IMR-90 (cell line): ENCODE measurements at regions of chr22 and their contacts with region 1.

Region 1: DNA sequence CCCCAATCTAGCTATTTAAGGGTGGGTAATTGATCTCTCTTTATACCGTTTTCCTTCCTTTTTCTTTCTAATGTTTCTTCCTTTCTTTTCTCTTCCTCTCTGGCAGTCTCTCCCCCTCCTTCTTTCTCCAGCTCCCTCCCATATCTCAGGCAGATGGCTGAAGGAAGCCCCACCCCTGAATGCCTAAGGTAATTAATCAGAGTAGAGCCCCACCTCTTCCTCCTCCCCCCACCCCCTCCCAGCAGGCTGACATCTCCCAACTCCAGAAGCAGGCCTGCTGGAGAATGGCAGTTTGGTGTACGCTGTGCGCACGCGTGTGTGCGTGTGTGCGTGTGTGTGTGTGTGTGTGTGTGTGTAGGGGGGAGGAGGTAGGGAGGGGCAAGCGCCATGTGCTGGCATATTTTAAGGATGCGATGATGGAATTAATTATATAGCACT is 122.6 kb downstream of the APOL5 start:
- DNase-seq: peak; percentile 98
- ATAC-seq: peak; percentile 87
- H3K4me3 ChIP-seq: peak overlapping the region; percentile 77
- H3K27ac ChIP-seq: peak overlapping the region; percentile 86
- H3K4me1 ChIP-seq: peaks cover 6% of the 10 kb centered on the region
- H3K27me3 ChIP-seq: no peaks in the 10 kb centered on the region
- CTCF ChIP-seq: no peak
- POLR2A ChIP-seq: peak; percentile 48; the same call in 1 of the 2 replicates
- RAD21 ChIP-seq: no peak

Region 2: GRCh38 chr22:35648066-35649025 is 192.0 kb before region 1 on chr22 and contains the start of gene APOL6:
- CTCF ChIA-PET with region 1: no interaction called
- POLR2A ChIA-PET with region 1: interaction called, 3 read pairs
- dilution Hi-C with region 1: no loop called
- in situ Hi-C with region 1: no loop called
- intact Hi-C with region 1: loop called (anchors 5 kb)
- DNase-seq: peak; percentile 76
- ATAC-seq: peak; percentile 45
- H3K4me3 ChIP-seq: peak within 1 kb of the TSS; percentile 73
- H3K27ac ChIP-seq: peak within 1 kb of the TSS; percentile 95
- H3K4me1 ChIP-seq: peaks cover 10% of the 10 kb centered on the region
- H3K27me3 ChIP-seq: no peaks in the 10 kb centered on the region
- CTCF ChIP-seq: no peak
- POLR2A ChIP-seq: 0 out of 2 replicates have a peak, but pooled peaks have one; percentile 26
- RAD21 ChIP-seq: no peak
- total RNA-seq, gene APOL6: 7.2 TPM in 2 replicates

Region 3: GRCh38 chr22:35749808-35750207 is 90.5 kb before region 1 on chr22:
- CTCF ChIA-PET with region 1: no interaction called
- POLR2A ChIA-PET with region 1: no interaction called
- dilution Hi-C with region 1: no loop called
- in situ Hi-C with region 1: no loop called
- intact Hi-C with region 1: loop called (anchors 2 kb)
- DNase-seq: no peak
- ATAC-seq: no peak
- H3K4me3 ChIP-seq: no peak overlapping the region
- H3K27ac ChIP-seq: no peak overlapping the region
- H3K4me1 ChIP-seq: peaks cover 18% of the 10 kb centered on the region
- H3K27me3 ChIP-seq: no peaks in the 10 kb centered on the region
- CTCF ChIP-seq: no peak
- POLR2A ChIP-seq: no peak
- RAD21 ChIP-seq: no peak

Region 4: GRCh38 chr22:35914665-35915476 is 74.5 kb after region 1 on chr22:
- CTCF ChIA-PET with region 1: interaction called, 3 read pairs
- POLR2A ChIA-PET with region 1: no interaction called
- dilution Hi-C with region 1: no loop called
- in situ Hi-C with region 1: no loop called
- intact Hi-C with region 1: loop called (anchors 1 kb)
- DNase-seq: peak; percentile 91
- ATAC-seq: peak; percentile 94
- H3K4me3 ChIP-seq: peak overlapping the region; percentile 36
- H3K27ac ChIP-seq: peak overlapping the region; percentile 80
- H3K4me1 ChIP-seq: peaks cover 12% of the 10 kb centered on the region
- H3K27me3 ChIP-seq: no peaks in the 10 kb centered on the region
- CTCF ChIP-seq: no peak
- POLR2A ChIP-seq: no peak
- RAD21 ChIP-seq: no peak

Region 5: GRCh38 chr22:37561212-37562048 is 1721.1 kb after region 1 on chr22:
- CTCF ChIA-PET with region 1: no interaction called
- POLR2A ChIA-PET with region 1: interaction called, 10 read pairs
- dilution Hi-C with region 1: no loop called
- in situ Hi-C with region 1: no loop called
- intact Hi-C with region 1: no loop called
- DNase-seq: peak; percentile 86
- ATAC-seq: peak; percentile 32
- H3K4me3 ChIP-seq: peak overlapping the region; percentile 82
- H3K27ac ChIP-seq: peak overlapping the region; percentile 100
- H3K4me1 ChIP-seq: peaks cover 29% of the 10 kb centered on the region
- H3K27me3 ChIP-seq: no peaks in the 10 kb centered on the region
- CTCF ChIP-seq: peak; percentile 92
- POLR2A ChIP-seq: no peak; the same call in 1 of the 2 replicates
- RAD21 ChIP-seq: peak; percentile 50